ENCODE measurements at regions of chr3 and their contacts with region 1.

Region 1: GRCh38 chr3:98329392-98330124 is 24.1 kb upstream of the OR5K4 start:
- DNase-seq: peak; percentile 41
- CTCF ChIP-seq: peak; percentile 81

Region 2: DNA sequence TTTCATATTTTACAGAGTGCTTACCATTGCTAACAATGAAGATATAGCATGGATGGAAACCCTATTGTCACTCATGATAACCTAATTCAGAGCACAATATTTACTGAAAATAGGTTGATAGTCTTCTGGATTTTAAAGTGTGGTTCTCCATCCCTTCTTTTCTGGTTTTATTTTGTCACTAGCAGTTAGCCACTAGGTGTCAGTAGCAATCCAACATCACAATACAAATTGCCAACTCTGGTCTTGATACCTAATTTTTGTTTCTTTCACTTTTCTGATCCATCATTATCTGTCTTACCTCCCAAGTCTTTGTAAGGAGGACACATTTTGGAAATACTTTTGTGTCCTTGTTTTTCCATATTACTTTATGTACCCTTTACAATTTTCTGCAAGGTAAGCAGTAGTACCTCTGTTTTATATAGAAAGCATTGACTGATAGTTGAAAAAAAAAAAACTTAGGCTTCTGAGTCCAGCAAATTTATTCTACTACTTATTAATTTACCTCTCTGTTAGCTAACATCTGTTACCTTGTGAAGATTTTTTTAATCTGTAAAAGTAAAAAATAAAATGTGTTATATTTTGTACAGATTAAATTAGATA is 536.0 kb before region 1 on chr3:
- in situ Hi-C with region 1: loop called (anchors 25 kb)
- DNase-seq: peak; percentile 23
- CTCF ChIP-seq: peak; percentile 64

Region 3: GRCh38 chr3:98039322-98040024 is 290.1 kb before region 1 on chr3:
- in situ Hi-C with region 1: loop called (anchors 5 kb)
- DNase-seq: peak; percentile 42
- CTCF ChIP-seq: peak; percentile 84

Region 4: GRCh38 chr3:98588065-98588464 is 258.5 kb after region 1 on chr3:
- in situ Hi-C with region 1: loop called (anchors 10 kb)
- DNase-seq: no peak
- CTCF ChIP-seq: no peak

Measured in GM13976 (cell line).